ENCODE measurements at regions of chr5 and their contacts with region 1.

Region 1: DNA sequence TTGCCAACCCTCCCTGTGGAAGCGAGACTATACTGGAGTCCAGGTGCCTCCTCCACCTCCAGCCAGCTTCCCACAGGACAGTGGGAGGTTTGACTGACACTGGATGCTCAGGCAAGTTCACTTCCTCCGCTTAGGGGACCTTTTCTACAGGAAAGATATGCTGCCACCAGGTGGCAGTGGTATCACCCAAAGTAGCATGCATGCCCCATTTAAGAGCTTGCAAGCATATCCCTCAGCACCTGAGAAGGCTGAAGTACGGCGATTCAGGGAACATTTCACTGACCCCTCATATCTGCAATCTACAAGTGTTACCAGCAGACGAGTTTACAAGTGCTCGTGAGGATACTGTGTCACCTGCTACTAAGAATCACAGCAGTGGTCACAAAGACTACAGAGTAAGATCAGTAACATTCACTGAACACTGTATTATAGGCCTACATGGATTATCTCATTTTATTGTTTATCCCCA is 75.5 kb downstream of the KLHL3 start:
- DNase-seq: peak; percentile 79
- ATAC-seq: peak; percentile 98
- H3K4me3 ChIP-seq: no peak overlapping the region
- H3K27ac ChIP-seq: no peak overlapping the region
- H3K4me1 ChIP-seq: no peaks in the 10 kb centered on the region
- H3K27me3 ChIP-seq: no peaks in the 10 kb centered on the region
- CTCF ChIP-seq: peak; percentile 77

Region 2: DNA sequence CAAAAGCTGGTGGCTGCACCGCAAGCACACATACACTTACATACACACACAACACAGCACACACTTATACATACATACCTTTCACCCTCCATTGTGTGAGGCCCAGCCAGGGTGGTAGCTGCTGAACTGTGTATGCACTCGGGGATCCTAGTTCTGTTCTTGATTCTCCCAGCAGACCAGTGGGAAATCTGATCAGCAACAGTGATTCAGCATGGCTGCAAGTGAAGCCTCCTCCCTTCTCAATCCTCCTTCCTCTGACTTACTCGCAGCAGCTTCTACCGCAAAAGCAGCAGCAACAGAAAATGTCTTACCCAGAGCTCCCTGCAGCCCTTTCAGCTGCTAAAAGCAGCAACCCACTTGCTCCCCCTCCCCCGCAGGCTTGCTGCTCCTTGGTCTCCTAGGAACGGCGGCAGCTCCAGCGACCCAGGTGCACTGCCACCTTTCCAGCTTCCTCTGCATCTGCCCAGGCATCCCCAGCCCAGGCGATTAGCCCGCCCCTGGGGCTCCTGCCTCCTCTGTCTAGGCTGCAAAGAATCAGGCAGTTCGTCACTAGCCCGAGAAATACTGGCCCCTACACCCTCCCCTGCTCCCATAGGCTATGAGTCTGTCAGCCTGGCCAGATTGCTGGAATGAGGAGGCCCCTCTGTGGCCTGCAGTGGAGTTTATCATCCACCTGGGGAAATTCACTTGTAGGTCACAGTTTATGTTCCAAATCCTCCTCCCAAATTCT is 75.3 kb after region 1 on chr5 and contains the start of gene KLHL3:
- CTCF ChIA-PET with region 1: interaction called, 16 read pairs
- POLR2A ChIA-PET with region 1: no interaction called
- intact Hi-C with region 1: loop called (anchors 1 kb)
- DNase-seq: peak; percentile 72
- ATAC-seq: peak; percentile 82
- H3K4me3 ChIP-seq: peak within 1 kb of the TSS; percentile 77
- H3K27ac ChIP-seq: peak within 1 kb of the TSS; percentile 40
- H3K4me1 ChIP-seq: peaks cover 40% of the 10 kb centered on the region
- H3K27me3 ChIP-seq: no peaks in the 10 kb centered on the region
- CTCF ChIP-seq: peak; percentile 58
- total RNA-seq, gene KLHL3: 2.9 and 4.0 TPM in 2 replicates

Region 3: DNA sequence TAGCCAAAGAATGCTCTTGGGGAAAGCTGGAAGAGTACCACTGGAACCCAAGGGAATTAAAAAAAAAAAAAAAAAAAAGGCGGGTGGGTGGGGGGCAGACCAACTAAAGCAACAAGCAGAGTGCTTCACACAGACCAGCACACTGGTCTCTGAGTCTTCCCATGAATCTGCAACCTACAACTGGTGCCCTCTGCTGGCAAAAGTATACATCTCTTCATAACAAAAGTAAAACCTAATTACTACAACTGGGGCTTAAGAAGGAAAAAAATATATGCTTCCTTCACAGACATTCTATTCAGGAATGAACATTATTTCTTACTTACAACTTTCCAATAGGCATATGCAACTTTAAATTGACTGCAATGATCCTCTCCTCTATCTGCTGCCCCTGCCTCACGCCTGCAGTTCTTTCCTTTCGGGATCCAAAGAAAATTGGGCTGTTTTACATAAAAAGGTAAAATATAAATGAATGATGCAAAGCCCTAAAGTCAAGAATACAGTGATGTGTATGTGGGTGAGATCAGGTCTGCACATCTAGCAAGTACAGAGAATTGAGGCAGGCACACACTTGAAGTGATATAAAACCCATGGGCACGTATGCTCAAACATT is 82.8 kb after region 1 on chr5:
- CTCF ChIA-PET with region 1: interaction called, 12 read pairs
- POLR2A ChIA-PET with region 1: no interaction called
- intact Hi-C with region 1: loop called (anchors 1 kb)
- DNase-seq: peak; percentile 73
- ATAC-seq: peak; percentile 84
- H3K4me3 ChIP-seq: no peak overlapping the region
- H3K27ac ChIP-seq: no peak overlapping the region
- H3K4me1 ChIP-seq: no peaks in the 10 kb centered on the region
- H3K27me3 ChIP-seq: no peaks in the 10 kb centered on the region
- CTCF ChIP-seq: peak; percentile 63

Measured in PC-3 (cell line).